Activated CD8-positive, alpha-beta T cell treated with anti-CD3 and anti-CD28 coated beads, Interleukin-2, amount 10 ng/mL, durations not matched to agents 7 days and 5 days (primary cell): ENCODE measurements at regions of chr11 and their contacts with region 1.

Region 1: DNA sequence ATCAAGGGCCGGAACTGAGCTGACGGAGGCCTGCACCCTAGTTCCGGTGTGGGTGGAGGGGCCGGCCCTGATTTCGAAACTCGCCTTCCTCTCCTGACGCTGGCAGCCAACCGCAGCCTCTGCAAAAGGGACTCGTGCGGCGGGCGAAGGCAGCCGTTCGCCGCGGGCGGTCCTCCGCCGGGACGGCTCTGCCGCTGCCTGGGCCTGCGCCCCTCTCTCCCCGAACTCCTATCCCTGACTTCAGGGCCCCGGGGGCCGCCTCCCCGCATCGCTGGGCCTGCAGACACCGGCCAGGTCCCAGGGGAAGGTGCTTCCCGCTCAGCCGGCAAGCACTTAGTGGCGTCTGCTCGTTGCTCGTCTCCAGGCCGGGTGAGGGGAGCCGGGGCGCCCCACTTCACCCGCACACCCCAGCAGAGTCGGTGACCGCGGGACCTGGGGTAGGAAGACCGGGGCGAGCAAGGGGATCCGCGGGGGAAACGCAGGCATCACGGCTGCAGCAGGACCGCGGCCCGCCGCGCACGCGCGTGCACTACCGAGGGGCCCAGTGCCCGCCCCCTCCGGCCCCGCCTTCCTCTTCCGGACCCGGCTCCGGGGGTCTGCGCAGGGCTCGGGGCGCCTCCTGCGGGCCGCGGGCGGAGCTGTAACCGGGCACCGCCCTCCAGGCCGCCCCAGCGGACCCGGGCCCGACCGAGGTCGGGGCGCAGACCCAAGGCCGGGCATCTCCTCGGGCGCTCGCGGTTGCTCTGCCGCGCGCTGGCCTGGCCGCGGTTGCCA is 464 bp upstream of the ANKRD13D start:
- DNase-seq: peak; percentile 94
- ATAC-seq: peak; percentile 72
- H3K4me3 Mint-ChIP-seq: peak overlapping the region; percentile 75
- H3K27ac Mint-ChIP-seq: peak overlapping the region; percentile 97
- H3K4me1 Mint-ChIP-seq: peaks cover 79% of the 10 kb centered on the region
- H3K27me3 Mint-ChIP-seq: no peaks in the 10 kb centered on the region

Region 2: DNA sequence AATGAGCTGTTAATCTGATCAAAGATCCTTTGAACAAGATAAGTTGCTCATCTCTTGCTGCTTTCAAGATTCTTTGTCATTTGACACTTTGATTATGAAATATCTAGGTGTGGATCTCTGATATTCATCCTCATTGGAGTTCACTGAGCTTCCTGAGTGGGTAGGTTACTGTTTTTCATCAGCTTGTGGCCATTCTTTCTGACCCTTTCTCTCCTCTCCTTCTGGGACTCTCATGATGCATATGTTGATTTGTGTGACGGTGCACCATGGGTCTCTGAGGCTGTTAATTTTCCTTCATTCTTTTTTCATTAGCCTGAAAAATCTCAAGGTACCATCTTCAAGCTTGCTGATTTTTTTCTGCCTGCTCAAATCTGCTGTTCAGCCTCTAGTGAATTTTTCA is 351.3 kb before region 1 on chr11:
- CTCF ChIA-PET with region 1: no interaction called
- POLR2A ChIA-PET with region 1: no interaction called
- DNase-seq: no peak
- ATAC-seq: no peak
- H3K4me3 Mint-ChIP-seq: no peak overlapping the region
- H3K27ac Mint-ChIP-seq: no peak overlapping the region
- H3K4me1 Mint-ChIP-seq: no peaks in the 10 kb centered on the region
- H3K27me3 Mint-ChIP-seq: peaks cover 3% of the 10 kb centered on the region

Region 3: GRCh38 chr11:67239783-67240575 is 48.7 kb before region 1 on chr11:
- CTCF ChIA-PET with region 1: no interaction called
- POLR2A ChIA-PET with region 1: interaction called, 13 read pairs
- DNase-seq: peak; percentile 98
- ATAC-seq: peak; percentile 94
- H3K4me3 Mint-ChIP-seq: peak overlapping the region; percentile 100
- H3K27ac Mint-ChIP-seq: peak overlapping the region; percentile 98
- H3K4me1 Mint-ChIP-seq: peaks cover 45% of the 10 kb centered on the region
- H3K27me3 Mint-ChIP-seq: no peaks in the 10 kb centered on the region

Region 4: GRCh38 chr11:67277231-67277961 is 11.2 kb before region 1 on chr11:
- CTCF ChIA-PET with region 1: interaction called, 60 read pairs
- POLR2A ChIA-PET with region 1: interaction called, 201 read pairs
- DNase-seq: peak; percentile 95
- ATAC-seq: peak; percentile 91
- H3K4me3 Mint-ChIP-seq: peak overlapping the region; percentile 81
- H3K27ac Mint-ChIP-seq: peak overlapping the region; percentile 99
- H3K4me1 Mint-ChIP-seq: peaks cover 77% of the 10 kb centered on the region
- H3K27me3 Mint-ChIP-seq: no peaks in the 10 kb centered on the region

Region 5: GRCh38 chr11:67303132-67303834 is 14.6 kb after region 1 on chr11 and contains the start of gene SSH3:
- CTCF ChIA-PET with region 1: no interaction called
- POLR2A ChIA-PET with region 1: interaction called, 11 read pairs
- DNase-seq: peak; percentile 55
- ATAC-seq: peak; percentile 84
- H3K4me3 Mint-ChIP-seq: peak within 1 kb of the TSS; percentile 55
- H3K27ac Mint-ChIP-seq: peak within 1 kb of the TSS; percentile 43
- H3K4me1 Mint-ChIP-seq: peaks cover 19% of the 10 kb centered on the region
- H3K27me3 Mint-ChIP-seq: no peaks in the 10 kb centered on the region
- total RNA-seq, gene SSH3: 12.0 to 13.0 TPM